Right ventricle myocardium inferior (tissue), 1 donor: ENCODE measurements at regions of chr2 and their contacts with region 1.

Region 1: GRCh38 chr2:237432484-237433092 is 18.6 kb upstream of the COL6A3 start:
- DNase-seq: no peak
- ATAC-seq: peak; percentile 44

Region 2: GRCh38 chr2:236600900-236601299 is 831.7 kb before region 1 on chr2:
- intact Hi-C with region 1: no loop called
- DNase-seq: no peak
- ATAC-seq: no peak

Region 3: GRCh38 chr2:237374284-237375060 is 58.1 kb before region 1 on chr2:
- intact Hi-C with region 1: no loop called
- DNase-seq: no peak
- ATAC-seq: no peak

Region 4: DNA sequence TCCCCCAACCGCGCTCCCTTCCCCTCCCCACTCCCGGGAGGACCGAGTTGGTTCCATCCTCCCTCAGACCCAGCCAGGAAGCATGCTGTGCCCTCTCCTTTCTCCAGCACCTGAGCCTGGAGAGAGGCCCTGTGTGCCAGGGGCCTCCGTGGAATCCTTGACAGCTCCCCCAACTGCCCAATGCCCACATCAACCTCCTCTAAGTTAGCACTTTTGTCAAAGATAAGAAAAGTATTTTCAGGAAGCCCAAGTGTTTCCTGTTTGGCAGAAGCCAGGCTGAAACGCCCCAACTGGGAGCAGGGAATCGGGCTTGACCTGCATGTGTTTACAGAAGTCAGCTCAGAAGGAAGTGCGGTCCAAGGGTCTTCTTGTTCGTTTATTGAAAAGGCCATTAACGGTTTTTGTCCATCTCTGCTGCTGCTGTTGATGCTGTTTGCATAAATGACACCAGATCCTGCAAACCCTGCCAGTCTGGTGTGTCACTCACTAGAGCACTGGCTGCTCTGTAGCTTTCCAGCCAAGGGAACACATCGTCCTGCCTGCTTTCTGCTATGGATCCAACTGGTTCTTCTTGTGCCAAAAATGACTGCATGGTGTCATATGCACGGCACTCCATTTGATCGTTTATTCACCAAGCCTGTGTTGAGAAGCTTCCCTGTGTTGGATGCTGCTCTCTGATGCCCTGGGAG is 16.7 kb after region 1 on chr2:
- intact Hi-C with region 1: loop called (anchors 1 kb)
- DNase-seq: peak; percentile 81
- ATAC-seq: peak; percentile 82